ENCODE measurements at regions of chr1 and their contacts with region 1.

Region 1: DNA sequence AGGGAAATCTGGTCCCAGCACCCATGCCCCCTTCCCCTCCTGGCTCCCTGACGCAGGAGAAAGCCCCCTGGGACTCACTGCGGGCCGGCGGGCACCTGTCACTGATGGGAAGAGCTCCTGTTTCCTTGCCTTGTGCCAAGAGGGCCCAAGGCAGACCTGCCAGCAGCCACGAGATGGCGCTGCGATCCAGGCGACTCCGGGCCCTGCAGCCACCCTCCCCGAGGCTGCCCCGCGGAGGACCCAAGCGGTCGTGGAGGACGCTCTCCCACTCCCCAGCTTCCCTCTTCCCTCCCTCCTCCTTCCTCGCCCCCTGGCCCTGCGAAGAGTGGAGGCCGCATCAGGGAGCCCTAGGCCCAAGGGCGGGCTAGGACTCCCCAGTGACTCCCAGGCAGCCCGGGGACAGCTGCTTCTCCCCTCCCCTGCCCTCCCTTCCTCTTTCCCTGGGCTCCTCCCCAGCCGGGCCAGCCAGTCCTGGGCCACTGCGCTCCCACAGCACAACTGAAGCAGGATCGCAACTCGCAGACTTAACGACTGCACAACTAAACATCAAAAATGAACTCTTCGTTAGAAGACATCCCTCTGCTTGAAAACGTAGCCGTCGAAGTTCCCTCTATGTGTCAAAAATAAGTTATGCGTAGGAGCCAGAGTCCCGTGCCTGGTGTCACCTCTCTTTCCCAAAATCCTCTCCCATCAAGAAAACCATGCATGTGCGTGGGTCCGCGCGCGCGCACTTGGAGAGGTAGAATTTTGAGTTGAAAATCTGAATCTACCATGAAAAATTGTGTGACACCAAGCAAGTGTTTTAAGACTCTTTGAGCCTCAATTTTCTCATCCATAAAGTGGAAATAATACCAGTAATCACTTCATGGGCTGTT is 34.2 kb downstream of the BATF3 start:
- DNase-seq: peak; percentile 82 to 87
- ATAC-seq: peak; percentile 92 to 95
- H3K4me3 ChIP-seq: peak overlapping the region; percentile 45
- H3K27ac ChIP-seq: peak overlapping the region; percentile 77 to 90
- H3K4me1 ChIP-seq: peaks cover 39% of the 10 kb centered on the region
- CTCF ChIP-seq: peak; percentile 93
- EP300 ChIP-seq: no peak
- POLR2A ChIP-seq: peak; percentile 38
- RAD21 ChIP-seq: peak; percentile 85 to 98

Region 2: DNA sequence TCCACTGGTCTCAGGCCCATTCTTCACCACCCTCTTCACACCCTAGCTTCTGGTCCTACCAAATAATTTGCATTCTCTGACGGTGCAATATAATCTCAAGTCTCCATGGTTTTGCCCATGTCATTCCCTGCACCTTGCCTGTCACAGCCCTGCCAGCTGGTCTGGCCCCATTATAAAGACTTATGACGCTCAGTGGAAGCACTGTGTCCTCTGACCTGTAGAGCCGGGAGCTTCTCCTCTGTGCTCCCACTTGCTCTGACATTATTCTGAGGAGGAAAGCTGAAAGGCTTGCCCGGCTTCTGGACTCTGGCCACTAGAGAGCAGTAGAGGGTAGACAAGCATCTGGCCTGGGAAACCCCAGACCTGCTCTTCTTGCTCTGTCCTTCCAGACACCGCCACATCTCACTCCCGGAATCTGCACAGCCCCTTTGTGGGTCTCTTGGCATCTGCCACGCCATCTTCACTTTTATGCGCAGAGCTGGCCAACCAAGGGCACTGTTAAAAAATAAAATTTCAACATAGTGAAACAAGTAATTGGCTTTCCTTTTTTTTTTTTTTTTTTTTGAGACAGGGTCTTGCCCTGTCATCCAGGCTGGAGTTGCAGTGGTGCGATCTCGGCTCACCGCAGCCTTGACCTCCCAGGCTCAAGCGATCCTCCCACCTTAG is 188.3 kb before region 1 on chr1:
- CTCF ChIA-PET with region 1: interaction called, 47 read pairs
- POLR2A ChIA-PET with region 1: no interaction called
- DNase-seq: peak; percentile 81 to 90
- ATAC-seq: peak; percentile 93 to 95
- H3K4me3 ChIP-seq: no peak overlapping the region
- H3K27ac ChIP-seq: peak overlapping the region; percentile 33 to 72; a peak in 5 of 6 replicates
- H3K4me1 ChIP-seq: peaks cover 21% of the 10 kb centered on the region
- CTCF ChIP-seq: peak; percentile 87
- EP300 ChIP-seq: no peak
- POLR2A ChIP-seq: no peak
- RAD21 ChIP-seq: peak; percentile 95

Region 3: GRCh38 chr1:212630158-212630900 is 35.1 kb before region 1 on chr1:
- CTCF ChIA-PET with region 1: interaction called, 11 read pairs
- POLR2A ChIA-PET with region 1: no interaction called
- DNase-seq: peak; percentile 45 to 75
- ATAC-seq: peak; percentile 69 to 91
- H3K4me3 ChIP-seq: no peak overlapping the region
- H3K27ac ChIP-seq: no peak overlapping the region
- H3K4me1 ChIP-seq: no peaks in the 10 kb centered on the region
- CTCF ChIP-seq: peak; percentile 54
- EP300 ChIP-seq: no peak
- POLR2A ChIP-seq: no peak
- RAD21 ChIP-seq: peak; percentile 45 to 57

Region 4: GRCh38 chr1:212685429-212685828 is 20.0 kb after region 1 on chr1:
- CTCF ChIA-PET with region 1: interaction called, 71 read pairs
- POLR2A ChIA-PET with region 1: no interaction called
- DNase-seq: no peak
- ATAC-seq: no peak
- H3K4me3 ChIP-seq: no peak overlapping the region
- H3K27ac ChIP-seq: no peak overlapping the region
- H3K4me1 ChIP-seq: 0 out of 3 replicates have a peak, but pooled peaks cover 6% of the 10 kb centered on the region
- CTCF ChIP-seq: no peak
- EP300 ChIP-seq: no peak
- POLR2A ChIP-seq: no peak
- RAD21 ChIP-seq: no peak

Region 5: DNA sequence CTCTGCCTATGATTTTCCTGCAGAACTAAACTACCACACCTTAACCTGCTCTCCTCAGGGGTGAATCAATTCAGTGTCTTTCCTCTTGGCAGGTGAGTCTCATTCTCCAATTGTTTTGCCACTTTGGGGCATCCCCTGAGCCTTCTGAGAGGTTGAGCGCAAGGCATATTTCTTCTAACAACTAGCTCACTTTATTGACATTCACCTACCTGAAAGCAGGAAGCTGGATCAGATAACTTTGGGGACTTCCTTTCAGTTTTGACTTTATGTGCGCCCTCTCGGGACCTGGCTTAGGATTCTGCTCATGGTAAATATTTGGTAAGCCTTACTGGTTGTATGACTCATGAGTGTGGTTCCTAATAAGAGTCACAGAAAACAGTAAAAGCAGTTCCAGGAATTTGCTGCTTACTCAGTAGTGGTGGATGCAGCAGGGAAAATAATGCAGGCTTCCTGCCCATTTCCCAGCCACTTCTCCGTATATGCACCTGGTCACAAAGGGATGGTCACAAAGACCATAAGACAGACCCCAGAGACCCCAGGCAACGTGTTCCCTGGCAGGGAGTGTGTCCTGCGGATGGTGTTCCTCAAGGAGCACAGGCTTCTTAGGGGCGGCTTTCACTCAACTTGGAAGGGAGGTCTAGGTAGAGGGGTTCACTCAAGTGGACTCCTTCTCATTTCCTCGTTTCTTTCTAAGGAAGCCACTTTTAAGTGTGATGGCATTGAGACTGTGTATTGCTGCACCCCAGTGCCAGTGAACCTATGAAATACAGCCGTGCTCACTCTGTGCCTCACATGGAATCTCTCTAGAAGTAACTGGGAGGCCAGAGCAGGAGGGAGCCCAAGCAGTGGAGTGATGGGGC is 56.1 kb after region 1 on chr1:
- CTCF ChIA-PET with region 1: interaction called, 10 read pairs
- POLR2A ChIA-PET with region 1: no interaction called
- DNase-seq: peak; percentile 28 to 55
- ATAC-seq: peak; percentile 93 to 94
- H3K4me3 ChIP-seq: 0 out of 3 replicates have a peak overlapping the region, but pooled peaks have one; percentile 2
- H3K27ac ChIP-seq: peak overlapping the region; percentile 52 to 68
- H3K4me1 ChIP-seq: peaks cover 42% of the 10 kb centered on the region
- CTCF ChIP-seq: no peak
- EP300 ChIP-seq: no peak
- POLR2A ChIP-seq: no peak
- RAD21 ChIP-seq: no peak

Region 6: GRCh38 chr1:212777151-212777550 is 111.7 kb after region 1 on chr1:
- CTCF ChIA-PET with region 1: interaction called, 115 read pairs
- POLR2A ChIA-PET with region 1: no interaction called
- DNase-seq: no peak
- ATAC-seq: no peak
- H3K4me3 ChIP-seq: no peak overlapping the region
- H3K27ac ChIP-seq: no peak overlapping the region
- H3K4me1 ChIP-seq: peaks cover 11% of the 10 kb centered on the region
- CTCF ChIP-seq: no peak
- EP300 ChIP-seq: no peak
- POLR2A ChIP-seq: no peak
- RAD21 ChIP-seq: no peak

Region 7: GRCh38 chr1:212884592-212884991 is 219.1 kb after region 1 on chr1:
- CTCF ChIA-PET with region 1: no interaction called
- POLR2A ChIA-PET with region 1: no interaction called
- DNase-seq: no peak
- ATAC-seq: no peak
- H3K4me3 ChIP-seq: no peak overlapping the region
- H3K27ac ChIP-seq: no peak overlapping the region
- H3K4me1 ChIP-seq: no peaks in the 10 kb centered on the region
- CTCF ChIP-seq: no peak
- EP300 ChIP-seq: no peak
- POLR2A ChIP-seq: no peak
- RAD21 ChIP-seq: no peak

Region 8: DNA sequence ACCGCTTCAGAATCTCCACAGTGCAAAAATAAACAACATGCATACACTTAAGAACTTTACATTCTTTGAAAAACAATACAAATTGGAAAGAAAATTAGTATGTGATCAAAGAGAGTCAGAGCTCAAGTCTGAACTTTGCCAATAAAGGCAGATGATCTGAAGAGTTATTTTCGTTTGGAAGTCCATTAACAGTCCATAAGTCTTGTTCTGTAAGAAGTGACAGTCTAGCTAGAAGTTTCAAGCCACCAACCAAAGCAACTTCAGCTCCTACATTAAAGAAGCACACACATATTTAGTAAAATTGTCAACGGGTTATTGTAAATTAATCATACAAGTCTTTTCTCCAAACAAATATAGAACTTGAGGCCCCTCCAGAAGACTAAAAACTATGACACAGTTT is 329.4 kb after region 1 on chr1:
- CTCF ChIA-PET with region 1: interaction called, 35 read pairs
- POLR2A ChIA-PET with region 1: no interaction called
- DNase-seq: no peak
- ATAC-seq: no peak
- H3K4me3 ChIP-seq: no peak overlapping the region
- H3K27ac ChIP-seq: peak overlapping the region; percentile 49; a peak in 3 of 6 replicates
- H3K4me1 ChIP-seq: peaks cover 18% of the 10 kb centered on the region
- CTCF ChIP-seq: no peak
- EP300 ChIP-seq: no peak
- POLR2A ChIP-seq: no peak
- RAD21 ChIP-seq: no peak

Measured in A549 (cell line).